ENCODE measurements at regions of chr5 and their contacts with region 1.

Region 1: DNA sequence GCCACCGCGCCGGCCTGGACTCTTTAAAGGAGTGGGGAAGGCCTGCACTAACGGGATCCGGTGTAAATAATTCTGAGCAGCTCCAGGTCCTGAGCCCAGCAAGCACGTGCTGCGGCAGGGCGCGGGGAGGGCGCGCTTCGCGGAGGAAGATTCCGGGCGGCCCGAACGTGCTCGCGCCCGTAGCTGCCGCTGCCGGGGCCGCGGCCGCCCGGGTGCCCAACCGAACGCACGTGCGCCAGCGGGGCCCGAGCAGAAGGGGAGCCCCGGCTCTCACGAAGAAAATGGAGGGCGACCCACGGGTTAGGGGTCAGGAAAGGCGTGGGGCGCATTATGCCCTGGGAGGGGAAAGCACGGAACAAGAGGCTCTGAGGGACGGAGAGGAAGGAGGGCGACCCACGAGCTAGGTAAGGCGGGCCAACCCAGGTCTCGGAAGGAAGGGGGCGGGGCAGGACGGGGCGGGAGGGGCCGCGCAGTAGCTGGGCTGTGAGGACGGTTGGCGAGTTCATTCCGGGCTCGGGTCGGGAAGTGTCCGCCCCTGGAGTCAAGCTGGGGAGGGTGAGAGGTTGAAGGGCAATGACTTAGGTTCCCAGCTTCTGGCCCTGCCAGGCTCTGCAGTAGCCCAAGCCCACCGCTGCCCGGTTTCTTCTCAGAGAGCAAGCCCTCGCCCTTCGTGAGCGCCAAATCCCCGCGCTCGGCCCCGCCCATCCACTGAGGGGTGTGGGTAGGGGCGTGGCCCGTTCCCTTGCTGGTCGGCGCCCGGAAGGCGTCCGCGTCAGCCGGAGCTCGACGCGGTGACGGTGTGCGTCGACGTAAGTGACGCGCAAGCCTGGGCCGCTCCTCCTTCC is at the start of gene ZNF131:
- DNase-seq: peak; percentile 95
- H3K4me3 ChIP-seq: peak within 1 kb of the TSS; percentile 87 to 99
- H3K27ac ChIP-seq: peak within 1 kb of the TSS; percentile 92 to 96
- H3K4me1 ChIP-seq: peaks cover 15 to 16% of the 10 kb centered on the region in 2 experiments; a peak in 3 of 4 replicates
- H3K27me3 ChIP-seq: no peaks in the 10 kb centered on the region
- CTCF ChIP-seq: no peak
- EP300 ChIP-seq: no peak
- RAD21 ChIP-seq: no peak
- polyA plus RNA-seq, gene ZNF131: 17.2 and 22.9 TPM in 2 replicates

Region 2: GRCh38 chr5:42701351-42702059 is 419.4 kb before region 1 on chr5:
- CTCF ChIA-PET with region 1: no interaction called
- POLR2A ChIA-PET with region 1: no interaction called
- DNase-seq: no peak
- H3K4me3 ChIP-seq: no peak overlapping the region
- H3K27ac ChIP-seq: no peak overlapping the region
- H3K4me1 ChIP-seq: no peaks in the 10 kb centered on the region
- H3K27me3 ChIP-seq: no peaks in the 10 kb centered on the region
- CTCF ChIP-seq: no peak
- EP300 ChIP-seq: no peak
- RAD21 ChIP-seq: no peak

Region 3: GRCh38 chr5:43000111-43000845 is 120.7 kb before region 1 on chr5:
- CTCF ChIA-PET with region 1: no interaction called
- POLR2A ChIA-PET with region 1: no interaction called
- DNase-seq: no peak
- H3K4me3 ChIP-seq: peak overlapping the region; percentile 33 to 58; a peak in 3 of 4 replicates
- H3K27ac ChIP-seq: peak overlapping the region; percentile 2 to 28; a peak in 3 of 4 replicates
- H3K4me1 ChIP-seq: no peaks in the 10 kb centered on the region; a peak in 1 of 4 replicates
- H3K27me3 ChIP-seq: peaks cover 40% of the 10 kb centered on the region; the same call in 1 of the 2 replicates
- CTCF ChIP-seq: no peak
- EP300 ChIP-seq: no peak
- RAD21 ChIP-seq: no peak

Region 4: GRCh38 chr5:43066799-43067741 is 53.9 kb before region 1 on chr5:
- CTCF ChIA-PET with region 1: no interaction called
- POLR2A ChIA-PET with region 1: interaction called, 17 read pairs
- DNase-seq: peak; percentile 68
- H3K4me3 ChIP-seq: peak overlapping the region; percentile 80 to 84
- H3K27ac ChIP-seq: peak overlapping the region; percentile 90 to 97
- H3K4me1 ChIP-seq: peaks cover 11 to 13% of the 10 kb centered on the region in 2 experiments; a peak in 3 of 4 replicates
- H3K27me3 ChIP-seq: no peaks in the 10 kb centered on the region
- CTCF ChIP-seq: no peak
- EP300 ChIP-seq: peak; percentile 83 to 97; a peak in 3 of 4 replicates
- RAD21 ChIP-seq: no peak

Region 5: DNA sequence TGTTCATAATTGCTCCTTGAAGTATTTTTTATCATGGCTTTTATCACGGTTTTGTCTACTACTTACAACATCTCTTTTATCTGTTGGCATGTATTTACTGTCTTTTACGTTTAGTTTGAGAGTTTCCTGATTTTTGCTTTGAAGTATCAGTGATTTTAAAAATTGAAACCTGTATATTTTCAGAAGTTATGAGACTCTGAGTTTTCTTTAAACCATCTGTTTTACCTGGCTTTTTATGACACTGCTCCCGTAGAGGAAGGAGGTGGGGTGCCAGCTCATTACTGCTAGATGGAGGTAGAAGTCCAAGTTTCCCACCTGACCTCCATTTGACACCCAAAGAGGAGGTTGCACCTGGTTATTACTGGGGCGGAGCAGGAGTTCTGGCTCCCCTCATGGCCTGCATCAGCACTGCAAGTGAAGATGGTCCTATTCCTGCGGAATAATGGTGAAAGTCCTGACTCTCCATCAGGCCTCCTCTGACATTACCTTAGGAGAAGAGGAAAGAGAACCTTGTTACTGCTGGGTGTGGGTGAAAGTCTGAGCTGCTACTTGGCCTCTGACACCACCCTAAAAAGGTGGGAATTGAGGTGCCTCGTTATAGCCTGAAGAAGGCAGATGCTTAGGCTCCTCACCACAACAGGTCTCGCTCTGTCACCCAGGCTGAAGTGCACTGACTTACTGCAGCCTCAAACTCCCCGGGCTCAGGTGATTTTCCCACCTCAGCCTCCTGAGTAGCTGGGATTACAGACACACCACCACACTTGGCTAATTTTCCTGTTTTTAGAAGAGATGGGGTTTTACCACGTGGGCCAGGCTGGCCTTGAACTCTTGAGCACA is 10.1 kb before region 1 on chr5:
- CTCF ChIA-PET with region 1: interaction called, 25 read pairs
- POLR2A ChIA-PET with region 1: interaction called, 4 read pairs
- DNase-seq: peak; percentile 32
- H3K4me3 ChIP-seq: no peak overlapping the region
- H3K27ac ChIP-seq: no peak overlapping the region
- H3K4me1 ChIP-seq: no peaks in the 10 kb centered on the region
- H3K27me3 ChIP-seq: no peaks in the 10 kb centered on the region
- CTCF ChIP-seq: peak; percentile 30; the same call in 1 of the 2 replicates
- EP300 ChIP-seq: no peak
- RAD21 ChIP-seq: no peak

Region 6: GRCh38 chr5:43396762-43397304 is 275.9 kb after region 1 on chr5:
- CTCF ChIA-PET with region 1: no interaction called
- POLR2A ChIA-PET with region 1: no interaction called
- DNase-seq: peak; percentile 53
- H3K4me3 ChIP-seq: peak overlapping the region in 1 of 2 experiments; percentile 8; a peak in 1 of 4 replicates
- H3K27ac ChIP-seq: no peak overlapping the region
- H3K4me1 ChIP-seq: no peaks in the 10 kb centered on the region
- H3K27me3 ChIP-seq: peaks cover 16% of the 10 kb centered on the region; the same call in 1 of the 2 replicates
- CTCF ChIP-seq: no peak
- EP300 ChIP-seq: no peak
- RAD21 ChIP-seq: no peak